Adrenal gland (tissue), 19 donors: ENCODE measurements at regions of chr1 and their contacts with region 1.

Region 1: DNA sequence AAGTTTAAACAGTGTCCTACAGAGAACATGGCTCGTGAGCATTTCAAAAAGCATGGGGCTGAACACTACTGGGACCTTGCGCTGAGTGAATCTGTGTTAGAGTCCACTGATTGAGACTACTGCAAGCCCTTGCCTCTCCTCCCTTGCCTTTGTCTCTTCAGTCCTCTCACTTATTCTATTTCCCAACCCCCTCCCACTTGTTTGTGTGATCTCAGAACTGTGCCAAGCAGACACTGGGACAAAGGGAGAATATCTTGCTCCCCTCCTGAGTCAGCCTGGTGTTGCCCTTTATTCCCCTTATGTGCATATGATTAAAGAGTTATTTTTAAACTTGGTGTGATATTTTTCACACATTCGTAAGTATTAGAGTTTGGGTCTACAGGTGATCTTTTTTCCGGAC is 11.1 kb upstream of the RPRD2 start:
- DNase-seq: no peak
- H3K4me3 ChIP-seq: no peak overlapping the region
- H3K27ac ChIP-seq: no peak overlapping the region
- H3K4me1 ChIP-seq: no peaks in the 10 kb centered on the region
- H3K27me3 ChIP-seq: no peaks in the 10 kb centered on the region
- CTCF ChIP-seq: no peak
- POLR2A ChIP-seq: no peak

Region 2: DNA sequence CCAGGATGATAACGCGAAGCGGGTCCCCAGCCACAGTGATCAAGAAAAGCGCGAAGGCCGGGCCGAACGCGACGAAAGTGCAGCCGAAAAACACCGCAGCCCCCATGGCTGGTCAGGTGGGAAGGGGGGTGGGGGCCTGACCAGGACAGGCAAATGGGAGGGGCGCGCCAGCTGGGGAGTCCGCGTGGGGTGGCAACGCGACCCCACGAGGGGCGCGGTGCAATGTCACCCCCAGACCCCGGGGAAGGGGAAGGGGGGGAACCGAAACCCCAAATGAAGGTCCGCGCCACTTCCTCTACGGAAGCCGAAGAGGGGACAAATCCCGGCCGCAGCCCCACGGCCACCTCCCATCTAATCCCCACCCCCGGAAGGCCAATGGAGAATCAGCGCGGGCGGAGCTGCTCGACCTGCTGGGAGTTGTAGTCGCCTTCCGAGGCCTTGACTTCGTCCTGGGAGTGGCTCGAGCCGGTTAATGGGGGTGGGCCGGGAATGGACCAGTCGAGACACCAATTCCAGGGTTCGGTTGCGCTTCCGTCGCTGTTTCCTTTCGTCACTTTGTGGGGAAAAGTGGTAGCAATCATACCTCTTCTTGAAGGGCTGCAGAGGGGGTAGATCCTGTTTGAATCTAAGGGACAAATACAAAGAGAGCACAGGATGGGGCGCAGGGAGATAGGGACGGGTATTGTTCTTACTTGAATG is 84.0 kb before region 1 on chr1 and contains the start of gene APH1A:
- intact Hi-C with region 1: no loop called
- DNase-seq: peak; percentile 97 to 99 (median 98)
- H3K4me3 ChIP-seq: peak within 1 kb of the TSS; percentile 76 to 97 (median 94)
- H3K27ac ChIP-seq: peak within 1 kb of the TSS; percentile 92 to 98 (median 95)
- H3K4me1 ChIP-seq: peaks cover 16 to 18% of the 10 kb centered on the region in 2 donors
- H3K27me3 ChIP-seq: no peaks in the 10 kb centered on the region
- CTCF ChIP-seq: no peak
- POLR2A ChIP-seq: peak in 1 of 2 donors; percentile 79
- total RNA-seq, gene APH1A: 102 to 179 (median 129) TPM

Region 3: DNA sequence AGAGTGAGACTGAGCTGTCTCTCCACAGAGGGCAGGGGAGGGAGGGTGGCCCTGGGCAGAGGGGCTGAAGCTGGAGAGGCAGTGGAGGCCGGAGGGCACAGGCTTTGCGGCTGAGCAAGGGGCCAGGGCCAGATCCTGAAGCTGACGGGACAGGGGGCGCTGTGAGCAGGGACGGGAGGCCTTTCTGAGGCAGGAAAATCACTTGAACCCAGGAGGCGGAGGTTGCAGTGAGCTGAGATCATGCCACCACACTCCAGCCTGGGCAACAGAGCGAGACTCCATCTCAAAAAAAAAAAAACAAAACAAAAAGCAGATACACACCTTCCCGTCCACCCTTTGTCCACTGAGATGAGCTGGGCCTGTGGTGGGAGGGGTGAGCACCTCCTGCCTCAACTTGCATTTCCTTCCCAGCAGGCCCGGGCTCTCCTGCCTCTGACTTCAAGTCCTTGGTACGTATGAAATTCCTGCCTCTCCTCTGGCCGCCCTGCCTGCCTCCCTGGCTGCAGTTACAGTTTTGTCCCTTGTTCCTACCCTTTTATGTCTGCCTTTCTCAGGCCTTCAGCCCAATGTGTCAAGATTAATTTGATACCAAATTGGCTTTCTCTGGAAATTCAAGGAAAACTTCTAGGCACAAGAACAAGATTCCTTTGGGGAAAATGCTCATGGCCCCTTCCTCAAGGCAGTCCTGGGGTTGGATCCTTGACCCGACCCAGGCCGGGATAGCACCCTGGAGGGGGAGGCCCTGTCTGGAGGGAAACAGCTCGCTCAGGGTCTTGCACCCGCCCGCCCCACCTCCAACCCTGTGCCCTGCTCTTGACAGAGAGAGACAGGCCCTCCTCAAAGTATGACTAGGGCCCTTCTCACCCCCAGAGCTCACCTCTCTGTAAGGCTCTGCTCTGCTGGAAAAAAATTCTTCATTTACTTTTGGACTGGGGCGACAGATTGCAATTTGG is 185.1 kb after region 1 on chr1:
- intact Hi-C with region 1: loop called in 1 of 2 experiments (anchors 10 kb)
- DNase-seq: peak in 1 of 7 donors; percentile 61
- H3K4me3 ChIP-seq: no peak overlapping the region
- H3K27ac ChIP-seq: no peak overlapping the region
- H3K4me1 ChIP-seq: peaks cover 0 to under 1% of the 10 kb centered on the region in 2 donors
- H3K27me3 ChIP-seq: no peaks in the 10 kb centered on the region
- CTCF ChIP-seq: no peak
- POLR2A ChIP-seq: no peak